B cell (primary cell): ENCODE measurements at regions of chr1 and their contacts with region 1.

Region 1: DNA sequence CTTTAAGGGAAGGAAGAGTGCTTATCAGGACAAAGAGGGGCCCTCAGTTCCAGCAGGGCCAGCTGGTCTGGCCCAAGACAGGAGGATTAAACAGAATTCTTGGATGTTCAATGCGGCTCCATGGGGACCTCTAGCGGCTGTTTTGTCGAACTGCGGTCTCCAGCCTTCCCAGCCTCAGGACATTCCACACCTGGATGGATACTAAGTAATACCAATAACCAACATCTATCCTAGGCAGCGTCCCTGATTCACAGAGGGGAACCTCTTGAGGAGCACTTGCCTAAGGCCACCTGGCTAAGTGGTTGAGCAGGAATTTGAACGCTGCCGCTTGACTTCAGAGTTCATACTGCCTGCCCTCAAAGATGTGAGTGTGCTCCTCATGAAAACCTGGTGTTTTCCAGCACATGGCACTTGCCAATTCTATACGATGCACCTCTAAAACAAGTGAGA is 15.5 kb upstream of the CD247 start:
- DNase-seq: peak; percentile 73
- ATAC-seq: peak; percentile 68
- H3K4me3 ChIP-seq: no peak overlapping the region
- H3K4me3 Mint-ChIP-seq: no peak overlapping the region
- H3K27ac ChIP-seq: no peak overlapping the region
- H3K27ac Mint-ChIP-seq: no peak overlapping the region
- H3K4me1 ChIP-seq: no peaks in the 10 kb centered on the region
- H3K4me1 Mint-ChIP-seq: peaks cover 5% of the 10 kb centered on the region
- H3K27me3 ChIP-seq: peaks cover 0 to 4% (median 0%) of the 10 kb centered on the region in 4 experiments
- H3K27me3 Mint-ChIP-seq: no peaks in the 10 kb centered on the region
- CTCF ChIP-seq: peak; percentile 94

Region 2: GRCh38 chr1:167273027-167273800 is 260.7 kb before region 1 on chr1:
- CTCF ChIA-PET with region 1: interaction called, 66 read pairs
- POLR2A ChIA-PET with region 1: no interaction called
- intact Hi-C with region 1: loop called (anchors 1 kb)
- DNase-seq: no peak
- ATAC-seq: no peak
- H3K4me3 ChIP-seq: no peak overlapping the region
- H3K4me3 Mint-ChIP-seq: no peak overlapping the region
- H3K27ac ChIP-seq: no peak overlapping the region
- H3K27ac Mint-ChIP-seq: no peak overlapping the region
- H3K4me1 ChIP-seq: no peaks in the 10 kb centered on the region
- H3K4me1 Mint-ChIP-seq: peaks cover 39% of the 10 kb centered on the region
- H3K27me3 ChIP-seq: no peaks in the 10 kb centered on the region
- H3K27me3 Mint-ChIP-seq: no peaks in the 10 kb centered on the region
- CTCF ChIP-seq: no peak

Region 3: GRCh38 chr1:167409183-167409582 is 124.7 kb before region 1 on chr1:
- CTCF ChIA-PET with region 1: interaction called, 11 read pairs
- POLR2A ChIA-PET with region 1: no interaction called
- intact Hi-C with region 1: no loop called
- DNase-seq: peak; percentile 19
- ATAC-seq: no peak
- H3K4me3 ChIP-seq: no peak overlapping the region
- H3K4me3 Mint-ChIP-seq: no peak overlapping the region
- H3K27ac ChIP-seq: no peak overlapping the region
- H3K27ac Mint-ChIP-seq: no peak overlapping the region
- H3K4me1 ChIP-seq: no peaks in the 10 kb centered on the region
- H3K4me1 Mint-ChIP-seq: peaks cover 6% of the 10 kb centered on the region
- H3K27me3 ChIP-seq: no peaks in the 10 kb centered on the region
- H3K27me3 Mint-ChIP-seq: no peaks in the 10 kb centered on the region
- CTCF ChIP-seq: peak; percentile 14

Region 4: GRCh38 chr1:167442124-167442848 is 91.6 kb before region 1 on chr1:
- CTCF ChIA-PET with region 1: interaction called, 59 read pairs
- POLR2A ChIA-PET with region 1: no interaction called
- intact Hi-C with region 1: loop called (anchors 1 kb)
- DNase-seq: peak; percentile 84
- ATAC-seq: peak; percentile 92
- H3K4me3 ChIP-seq: no peak overlapping the region
- H3K4me3 Mint-ChIP-seq: peak overlapping the region; percentile 37
- H3K27ac ChIP-seq: no peak overlapping the region
- H3K27ac Mint-ChIP-seq: no peak overlapping the region
- H3K4me1 ChIP-seq: peaks cover 25 to 29% of the 10 kb centered on the region in 2 donors
- H3K4me1 Mint-ChIP-seq: peaks cover 35% of the 10 kb centered on the region
- H3K27me3 ChIP-seq: peaks cover 0 to 20% (median 3%) of the 10 kb centered on the region in 4 experiments
- H3K27me3 Mint-ChIP-seq: peaks cover 5% of the 10 kb centered on the region
- CTCF ChIP-seq: peak; percentile 93

Region 5: DNA sequence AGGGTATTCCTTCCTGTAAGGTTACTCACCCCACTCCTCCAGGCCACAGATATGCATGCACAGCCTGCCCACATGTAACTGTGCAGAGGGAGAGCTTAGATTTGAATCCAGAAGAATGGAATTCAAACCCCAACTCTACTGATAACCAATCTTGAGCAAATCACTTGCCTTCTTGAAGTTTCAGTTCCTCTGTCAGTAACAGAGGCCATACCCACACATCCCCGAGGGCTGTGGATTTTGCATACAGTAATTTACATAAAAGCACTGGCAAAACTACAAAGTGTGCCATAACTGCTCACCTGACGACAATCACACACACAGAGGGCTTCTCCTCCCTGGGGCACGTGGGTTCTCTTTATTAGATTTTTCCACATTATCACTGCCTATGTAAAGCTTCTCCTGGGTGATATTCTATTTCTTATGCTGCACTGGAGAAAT is 34.2 kb before region 1 on chr1:
- CTCF ChIA-PET with region 1: interaction called, 25 read pairs
- POLR2A ChIA-PET with region 1: no interaction called
- intact Hi-C with region 1: no loop called
- DNase-seq: peak; percentile 88
- ATAC-seq: peak; percentile 98
- H3K4me3 ChIP-seq: peak overlapping the region in 1 of 5 experiments; percentile 34
- H3K4me3 Mint-ChIP-seq: peak overlapping the region; percentile 68
- H3K27ac ChIP-seq: no peak overlapping the region
- H3K27ac Mint-ChIP-seq: peak overlapping the region; percentile 18
- H3K4me1 ChIP-seq: peaks cover 39% of the 10 kb centered on the region in 2 donors
- H3K4me1 Mint-ChIP-seq: peaks cover 39% of the 10 kb centered on the region
- H3K27me3 ChIP-seq: peaks cover 0 to 66% (median 55%) of the 10 kb centered on the region in 4 experiments
- H3K27me3 Mint-ChIP-seq: peaks cover 75% of the 10 kb centered on the region
- CTCF ChIP-seq: no peak

Region 6: DNA sequence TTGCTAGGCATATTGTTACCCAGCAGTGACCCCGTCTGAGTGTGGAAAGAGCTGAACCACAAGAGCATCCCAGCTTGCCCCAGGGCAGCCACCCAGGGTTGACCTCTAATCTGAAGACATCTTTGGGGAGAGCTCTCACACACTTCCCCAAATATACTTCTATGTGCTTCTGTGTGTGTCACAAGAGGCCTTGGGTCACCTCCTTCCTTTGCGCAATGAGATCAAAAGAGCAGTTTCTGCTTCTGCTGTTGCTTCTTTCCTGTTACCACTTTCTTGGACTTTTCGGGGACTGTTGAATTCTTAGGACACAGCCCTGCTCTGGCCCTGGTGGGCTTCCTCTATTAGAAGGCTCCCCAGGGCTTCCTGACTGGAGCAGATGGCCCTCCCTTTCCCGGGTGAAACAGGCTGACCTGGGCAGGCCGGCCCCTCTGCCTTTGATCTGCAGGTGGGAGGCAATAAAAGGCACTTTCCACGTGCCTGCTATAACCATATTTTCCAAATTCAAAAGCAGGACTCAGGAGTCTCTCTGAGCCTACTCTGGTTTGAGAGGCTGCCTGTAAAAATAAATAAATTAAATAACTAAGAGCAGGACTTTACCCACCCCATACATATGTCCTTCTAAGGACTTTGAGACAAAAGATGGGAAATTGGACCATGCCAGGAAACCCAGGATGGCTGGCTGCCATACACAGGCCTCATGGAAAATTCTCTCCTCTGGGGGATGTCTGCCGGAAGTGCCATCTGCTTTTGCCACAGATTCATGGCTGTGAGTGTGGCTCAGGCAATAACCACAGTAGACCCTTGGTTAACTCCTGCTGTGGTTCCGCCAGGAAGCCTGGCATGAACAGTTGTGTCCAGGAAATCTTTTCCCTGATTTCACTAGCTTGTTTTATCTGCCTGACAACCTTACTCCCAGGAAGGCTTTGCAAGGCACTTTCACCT is 67.8 kb after region 1 on chr1:
- CTCF ChIA-PET with region 1: no interaction called
- POLR2A ChIA-PET with region 1: no interaction called
- intact Hi-C with region 1: no loop called
- DNase-seq: peak; percentile 70
- ATAC-seq: peak; percentile 81
- H3K4me3 ChIP-seq: no peak overlapping the region
- H3K4me3 Mint-ChIP-seq: peak overlapping the region; percentile 39
- H3K27ac ChIP-seq: peak overlapping the region; percentile 48 to 81
- H3K27ac Mint-ChIP-seq: peak overlapping the region; percentile 64
- H3K4me1 ChIP-seq: peaks cover 38 to 39% of the 10 kb centered on the region in 2 donors
- H3K4me1 Mint-ChIP-seq: peaks cover 41% of the 10 kb centered on the region
- H3K27me3 ChIP-seq: no peaks in the 10 kb centered on the region
- H3K27me3 Mint-ChIP-seq: no peaks in the 10 kb centered on the region
- CTCF ChIP-seq: no peak